ENCODE measurements at regions of chr19 and their contacts with region 1.

Region 1: DNA sequence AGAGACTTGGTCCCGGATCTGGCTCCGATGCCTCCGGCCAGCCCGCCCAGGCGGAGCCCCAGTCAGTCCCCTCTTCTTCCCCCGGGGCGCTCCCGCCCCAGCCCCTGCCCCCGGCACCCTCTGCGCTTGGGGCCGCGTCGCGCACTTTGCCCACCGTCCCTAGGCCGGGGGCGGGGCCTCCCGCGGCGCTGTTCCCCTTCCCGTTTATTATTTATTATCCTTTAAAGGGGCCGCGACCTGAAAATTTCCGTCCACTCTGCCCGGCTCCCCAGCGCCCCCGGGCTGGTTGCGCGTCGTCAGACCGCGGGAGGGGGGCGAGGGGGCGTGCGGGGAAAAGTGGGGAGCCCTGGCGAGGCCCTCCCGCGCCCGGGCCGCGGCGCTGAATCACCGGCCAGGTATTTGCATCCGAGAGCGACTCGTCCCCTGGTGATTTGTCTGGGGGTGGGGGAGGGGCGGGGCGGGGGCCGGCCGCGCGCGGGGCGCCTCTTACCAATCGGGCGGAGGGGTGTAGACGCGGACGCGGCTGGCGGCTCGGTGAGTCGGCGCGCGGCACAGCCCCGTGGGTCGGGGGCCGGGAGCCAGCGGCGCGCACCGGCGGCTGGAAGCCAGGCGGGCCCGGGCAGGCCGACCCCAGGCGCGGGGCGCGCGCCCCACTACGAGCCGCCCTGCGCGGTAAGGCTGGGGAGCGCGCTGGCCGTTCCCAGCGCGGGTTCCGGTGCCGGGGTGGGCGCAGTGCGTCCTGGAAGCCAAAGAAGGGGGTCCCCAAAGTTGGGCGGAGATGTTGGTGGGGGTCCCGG is at the start of gene ARID3A:
- DNase-seq: peak; percentile 84
- ATAC-seq: peak; percentile 66
- H3K4me3 Mint-ChIP-seq: peak within 1 kb of the TSS; percentile 86
- H3K27ac Mint-ChIP-seq: peak within 1 kb of the TSS; percentile 82
- H3K4me1 Mint-ChIP-seq: peaks cover 22% of the 10 kb centered on the region
- H3K27me3 Mint-ChIP-seq: no peaks in the 10 kb centered on the region
- CTCF ChIP-seq: no peak
- total RNA-seq, gene ARID3A: 67.7 and 74.9 TPM in 2 replicates

Region 2: GRCh38 chr19:372306-372890 is 553.3 kb before region 1 on chr19:
- CTCF ChIA-PET with region 1: no interaction called
- POLR2A ChIA-PET with region 1: no interaction called
- intact Hi-C with region 1: no loop called
- DNase-seq: no peak
- ATAC-seq: no peak
- H3K4me3 Mint-ChIP-seq: no peak overlapping the region
- H3K27ac Mint-ChIP-seq: no peak overlapping the region
- H3K4me1 Mint-ChIP-seq: no peaks in the 10 kb centered on the region
- H3K27me3 Mint-ChIP-seq: peaks cover 22% of the 10 kb centered on the region
- CTCF ChIP-seq: no peak

Region 3: DNA sequence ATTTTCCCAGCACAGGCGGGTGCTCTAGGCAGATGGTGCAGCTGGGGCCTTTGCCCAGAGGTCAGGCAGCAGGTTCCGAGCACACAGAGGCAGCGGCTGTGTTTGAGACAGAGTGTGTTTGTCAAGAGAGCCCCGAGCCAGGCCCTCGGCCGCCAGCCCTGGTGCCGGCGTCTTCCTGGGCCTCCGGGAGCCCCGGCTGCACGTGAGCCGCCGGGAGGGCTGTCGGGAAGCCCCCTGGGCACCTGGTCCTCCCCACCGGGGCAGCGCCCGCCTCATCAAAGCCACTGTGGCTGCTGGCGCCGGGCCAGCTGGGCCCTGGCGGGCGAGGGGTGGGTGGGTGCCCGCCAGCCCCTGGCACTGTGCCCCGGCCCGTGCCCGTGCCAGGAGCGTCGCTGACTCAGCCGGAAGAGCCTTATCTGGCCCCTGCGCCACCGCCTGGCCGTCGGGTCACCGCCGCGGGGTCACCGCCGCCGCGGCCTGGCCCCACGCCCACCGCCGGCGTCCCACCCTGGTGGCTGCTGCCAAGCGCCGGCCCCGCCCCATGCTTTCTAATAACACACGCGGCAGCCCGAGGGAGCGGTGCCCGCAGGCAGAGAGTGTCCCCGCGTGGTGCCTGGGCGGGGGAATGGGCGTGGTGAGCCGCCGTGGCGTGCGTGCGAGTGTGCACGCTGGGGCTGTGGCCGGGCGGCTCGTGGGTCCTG is 15.0 kb after region 1 on chr19:
- CTCF ChIA-PET with region 1: interaction called, 3 read pairs
- POLR2A ChIA-PET with region 1: interaction called, 9 read pairs
- intact Hi-C with region 1: loop called (anchors 1 kb)
- DNase-seq: peak; percentile 73
- ATAC-seq: peak; percentile 72
- H3K4me3 Mint-ChIP-seq: peak overlapping the region; percentile 75
- H3K27ac Mint-ChIP-seq: peak overlapping the region; percentile 80
- H3K4me1 Mint-ChIP-seq: peaks cover 42% of the 10 kb centered on the region
- H3K27me3 Mint-ChIP-seq: no peaks in the 10 kb centered on the region
- CTCF ChIP-seq: no peak

Region 4: GRCh38 chr19:947265-948036 is 21.7 kb after region 1 on chr19:
- CTCF ChIA-PET with region 1: interaction called, 4 read pairs
- POLR2A ChIA-PET with region 1: interaction called, 18 read pairs
- intact Hi-C with region 1: loop called (anchors 1 kb)
- DNase-seq: peak; percentile 84
- ATAC-seq: peak; percentile 76
- H3K4me3 Mint-ChIP-seq: peak overlapping the region; percentile 81
- H3K27ac Mint-ChIP-seq: peak overlapping the region; percentile 93
- H3K4me1 Mint-ChIP-seq: peaks cover 57% of the 10 kb centered on the region
- H3K27me3 Mint-ChIP-seq: no peaks in the 10 kb centered on the region
- CTCF ChIP-seq: no peak

Region 5: DNA sequence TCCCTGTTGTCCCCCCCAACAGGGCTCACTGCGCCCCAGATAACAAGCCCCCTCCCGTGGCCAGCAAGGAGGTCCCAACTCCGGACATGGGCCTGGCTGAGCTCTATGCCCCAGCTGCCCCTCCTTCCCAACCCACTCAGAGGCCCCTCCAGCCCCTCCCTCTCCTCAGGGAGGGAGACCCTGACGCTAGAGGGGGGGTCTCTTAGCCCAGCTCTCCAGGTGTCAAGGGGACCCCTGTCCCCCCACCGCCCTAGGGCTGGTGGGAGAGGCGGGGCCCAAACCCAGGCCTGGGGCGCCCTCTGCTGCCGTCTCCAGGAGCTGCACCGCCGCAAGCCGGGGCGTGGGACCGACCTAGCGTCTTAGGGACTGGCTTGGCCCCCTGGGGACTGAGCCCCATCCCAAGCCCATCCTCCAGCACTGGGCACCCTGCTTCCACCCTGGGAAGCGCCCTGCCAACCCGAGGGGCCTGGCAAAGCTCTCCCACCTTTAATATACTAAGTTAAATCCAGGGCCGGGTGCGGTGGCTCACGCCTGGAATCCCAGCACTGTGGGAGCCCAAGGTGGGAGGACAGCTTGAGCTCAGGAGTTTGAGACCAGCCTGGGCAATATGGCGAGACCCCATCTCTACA is 75.9 kb after region 1 on chr19:
- CTCF ChIA-PET with region 1: interaction called, 4 read pairs
- POLR2A ChIA-PET with region 1: no interaction called
- intact Hi-C with region 1: loop called (anchors 1 kb)
- DNase-seq: peak; percentile 75
- ATAC-seq: peak; percentile 77
- H3K4me3 Mint-ChIP-seq: no peak overlapping the region
- H3K27ac Mint-ChIP-seq: no peak overlapping the region
- H3K4me1 Mint-ChIP-seq: peaks cover 13% of the 10 kb centered on the region
- H3K27me3 Mint-ChIP-seq: peaks cover 29% of the 10 kb centered on the region
- CTCF ChIP-seq: no peak

Region 6: DNA sequence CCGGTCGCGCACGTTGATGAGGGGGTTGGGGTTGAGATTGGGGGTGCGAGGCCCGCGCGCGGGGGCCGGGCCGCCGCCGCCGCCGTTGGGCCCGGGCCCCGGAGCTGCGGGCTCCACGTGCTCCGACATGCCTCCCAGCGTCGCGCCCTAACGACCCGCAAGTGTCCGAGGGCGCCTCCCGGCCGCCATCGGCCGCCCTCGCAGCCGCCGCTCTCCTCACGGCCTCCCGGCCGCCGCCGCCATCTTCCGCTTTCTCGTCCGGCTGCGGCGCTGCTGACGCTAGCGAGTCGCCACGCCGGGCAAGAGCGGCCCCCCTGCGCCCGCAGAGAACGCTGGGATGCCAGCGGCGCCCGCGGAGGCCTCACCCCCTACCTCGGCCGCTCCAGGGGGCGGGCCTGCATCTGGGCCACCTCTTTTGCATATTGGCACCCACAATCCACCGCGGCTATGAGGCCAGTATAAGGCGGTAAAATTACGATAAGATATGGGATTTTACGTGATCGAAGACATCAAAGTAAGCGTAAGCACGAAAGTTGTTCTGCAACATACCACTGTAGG is 95.2 kb after region 1 on chr19 and contains the start of gene TMEM259:
- CTCF ChIA-PET with region 1: no interaction called
- POLR2A ChIA-PET with region 1: interaction called, 8 read pairs
- intact Hi-C with region 1: loop called (anchors 1 kb)
- DNase-seq: peak; percentile 95
- ATAC-seq: peak; percentile 87
- H3K4me3 Mint-ChIP-seq: peak within 1 kb of the TSS; percentile 87
- H3K27ac Mint-ChIP-seq: peak within 1 kb of the TSS; percentile 99
- H3K4me1 Mint-ChIP-seq: peaks cover 53% of the 10 kb centered on the region
- H3K27me3 Mint-ChIP-seq: no peaks in the 10 kb centered on the region
- CTCF ChIP-seq: no peak
- total RNA-seq, gene TMEM259: 223 and 257 TPM in 2 replicates

Region 7: GRCh38 chr19:1189419-1189818 is 263.7 kb after region 1 on chr19:
- CTCF ChIA-PET with region 1: no interaction called
- POLR2A ChIA-PET with region 1: no interaction called
- intact Hi-C with region 1: loop called (anchors 5 kb)
- DNase-seq: no peak
- ATAC-seq: no peak
- H3K4me3 Mint-ChIP-seq: no peak overlapping the region
- H3K27ac Mint-ChIP-seq: no peak overlapping the region
- H3K4me1 Mint-ChIP-seq: no peaks in the 10 kb centered on the region
- H3K27me3 Mint-ChIP-seq: no peaks in the 10 kb centered on the region
- CTCF ChIP-seq: no peak